OCI-LY7 (cell line): ENCODE measurements at regions of chr5 and their contacts with region 1.

Region 1: DNA sequence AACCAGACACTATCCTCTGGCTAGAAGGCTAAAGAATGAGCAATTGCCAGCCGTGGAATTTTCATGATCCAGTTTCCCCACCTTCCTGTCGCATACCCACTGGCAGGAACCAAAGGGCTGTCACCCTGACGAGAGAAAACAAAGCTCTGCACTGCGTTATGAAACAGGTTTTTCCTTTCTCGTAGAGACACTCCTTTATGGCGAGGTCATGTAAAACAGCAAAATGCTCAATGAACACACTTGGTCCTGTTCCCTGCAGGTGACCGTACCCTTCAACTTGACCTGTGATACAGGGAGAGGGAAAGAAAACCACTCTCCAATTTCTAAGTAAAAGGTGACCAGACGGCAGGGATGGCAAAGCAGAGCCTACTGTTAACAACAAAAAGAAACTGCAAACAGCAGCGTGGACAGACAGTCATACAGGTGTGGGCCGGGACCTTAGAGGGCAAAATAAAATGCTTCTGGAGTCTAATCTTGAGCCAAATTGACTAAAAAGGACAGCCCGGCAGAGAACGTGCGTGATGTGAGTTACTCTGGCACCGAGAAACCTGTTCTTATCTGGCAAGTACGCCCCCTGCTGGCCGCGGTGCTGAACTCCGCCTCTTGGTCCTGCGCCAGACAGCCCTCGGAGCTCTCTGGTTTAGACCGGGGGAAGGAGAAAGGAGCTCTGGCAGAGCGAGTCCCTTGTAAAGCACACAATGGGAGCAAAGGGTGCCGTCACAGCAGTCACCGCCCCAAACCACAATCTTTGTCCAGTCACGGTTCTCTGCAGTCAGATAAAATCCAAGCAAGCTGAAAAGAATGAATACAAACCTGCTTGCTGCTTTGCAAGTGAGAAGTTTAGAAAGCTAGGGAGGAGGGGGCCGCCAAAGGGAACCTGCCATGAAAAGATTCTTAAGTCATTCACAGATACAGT is 98.9 kb downstream of the EFNA5 start:
- DNase-seq: peak; percentile 94
- H3K4me3 ChIP-seq: peak overlapping the region; percentile 60
- H3K27ac ChIP-seq: peak overlapping the region; percentile 96
- H3K4me1 ChIP-seq: peaks cover 63% of the 10 kb centered on the region
- CTCF ChIP-seq: peak; percentile 96

Region 2: DNA sequence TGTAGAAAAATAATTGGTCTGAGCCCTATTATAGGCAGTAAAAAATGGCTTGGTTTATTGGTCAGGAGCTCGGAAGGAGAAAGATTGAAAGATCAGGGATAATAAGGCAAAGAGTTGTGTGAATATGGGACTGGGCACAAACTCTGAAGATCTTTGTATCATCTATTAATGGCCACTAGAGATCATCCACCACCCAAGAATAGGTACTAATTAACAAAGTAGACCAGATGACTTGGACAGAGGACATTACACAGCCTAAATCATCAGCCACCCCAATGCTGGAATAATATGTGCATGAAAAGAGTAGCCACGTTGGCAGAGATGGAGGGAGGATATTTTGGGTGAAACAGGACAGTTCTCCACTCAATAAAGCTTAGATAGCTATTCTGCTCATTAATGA is 265.3 kb before region 1 on chr5:
- CTCF ChIA-PET with region 1: no interaction called
- POLR2A ChIA-PET with region 1: no interaction called
- intact Hi-C with region 1: loop called (anchors 2 kb)
- DNase-seq: peak; percentile 13
- H3K4me3 ChIP-seq: no peak overlapping the region
- H3K27ac ChIP-seq: no peak overlapping the region
- H3K4me1 ChIP-seq: peaks cover 18% of the 10 kb centered on the region
- CTCF ChIP-seq: no peak

Region 3: DNA sequence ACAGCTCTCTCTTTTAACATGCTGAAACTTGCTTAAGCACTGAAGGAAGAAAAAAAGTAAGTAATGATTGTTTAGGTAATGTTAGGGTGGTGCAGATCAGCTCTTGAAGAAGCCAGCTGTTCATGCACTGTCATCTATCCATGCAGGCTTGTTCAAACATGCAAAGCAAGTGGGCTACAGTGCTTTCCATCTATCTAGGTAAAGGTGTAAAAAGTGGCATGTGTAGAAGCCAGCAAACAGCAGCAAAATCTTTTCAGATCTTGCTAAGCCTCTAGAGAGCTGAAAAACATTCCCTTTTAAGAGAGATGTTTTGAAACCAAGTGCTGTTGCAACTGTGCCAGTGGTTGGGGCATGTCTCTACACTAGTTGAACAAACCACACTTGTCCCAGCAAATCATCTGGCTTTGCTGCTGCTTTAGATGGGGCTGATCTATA is 115.6 kb before region 1 on chr5:
- CTCF ChIA-PET with region 1: no interaction called
- POLR2A ChIA-PET with region 1: interaction called, 5 read pairs
- intact Hi-C with region 1: loop called (anchors 2 kb)
- DNase-seq: no peak
- H3K4me3 ChIP-seq: no peak overlapping the region
- H3K27ac ChIP-seq: no peak overlapping the region
- H3K4me1 ChIP-seq: peaks cover 55% of the 10 kb centered on the region
- CTCF ChIP-seq: no peak

Region 4: DNA sequence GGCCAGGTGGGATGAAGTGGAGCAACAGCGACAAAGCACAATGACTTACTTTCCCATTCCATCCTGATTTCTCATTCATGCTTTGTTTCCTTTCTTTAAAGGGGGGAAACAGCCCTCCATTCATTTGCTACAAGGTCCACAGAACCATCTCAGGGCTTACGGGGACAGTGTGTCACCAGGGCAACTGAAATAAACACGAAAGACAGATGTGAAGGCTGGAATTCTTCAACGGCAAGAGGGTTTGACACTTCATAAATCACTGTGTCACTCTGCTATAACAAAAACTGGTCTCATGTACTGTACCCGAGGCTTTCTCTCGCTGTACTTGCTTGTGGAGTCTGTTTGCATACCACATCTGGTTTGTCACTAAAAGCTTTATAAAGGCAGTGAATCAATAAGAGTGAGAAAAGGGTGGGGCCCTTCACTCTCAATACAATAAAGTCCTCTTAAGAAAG is 52.0 kb before region 1 on chr5:
- CTCF ChIA-PET with region 1: interaction called, 33 read pairs
- POLR2A ChIA-PET with region 1: interaction called, 154 read pairs
- intact Hi-C with region 1: loop called (anchors 1 kb)
- DNase-seq: peak; percentile 87
- H3K4me3 ChIP-seq: peak overlapping the region; percentile 45
- H3K27ac ChIP-seq: peak overlapping the region; percentile 77
- H3K4me1 ChIP-seq: peaks cover 88% of the 10 kb centered on the region
- CTCF ChIP-seq: no peak

Region 5: DNA sequence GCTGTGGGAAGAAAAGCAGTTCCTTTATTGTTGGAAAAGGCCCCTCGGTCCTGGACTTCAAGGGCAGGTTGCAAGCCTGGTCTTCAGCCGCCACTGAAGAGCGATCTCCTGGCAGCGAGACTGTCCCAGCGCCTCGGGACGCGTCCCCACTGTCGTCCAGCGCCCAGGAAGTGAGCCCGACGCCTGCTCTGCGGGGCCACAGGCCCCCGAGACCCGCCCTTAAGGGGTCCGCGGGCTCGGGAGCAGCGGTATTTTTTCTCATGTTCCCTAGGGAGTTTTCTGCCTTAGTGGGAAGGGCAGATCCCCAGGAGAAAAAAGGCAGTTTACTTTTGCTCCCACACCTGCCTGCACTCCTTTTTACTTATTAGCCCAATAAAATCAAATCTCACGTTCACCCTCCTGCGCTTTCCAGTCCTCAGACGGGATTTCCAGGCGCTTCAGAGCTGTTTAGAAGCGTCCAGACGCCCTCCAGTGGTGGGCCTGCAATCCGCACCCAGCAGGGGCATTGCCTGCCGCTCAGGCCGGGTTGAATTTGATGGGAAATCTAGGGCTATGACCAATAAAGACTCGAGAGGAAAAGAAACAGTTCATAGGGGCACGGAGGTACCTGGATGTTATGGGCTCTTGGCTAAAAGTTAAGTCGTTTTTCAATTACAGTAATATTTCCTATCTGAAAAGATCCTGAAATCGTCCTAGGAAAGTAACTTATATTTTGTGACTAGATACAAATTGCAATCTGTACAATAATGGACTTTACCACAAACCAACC is 101.7 kb after region 1 on chr5:
- CTCF ChIA-PET with region 1: no interaction called
- POLR2A ChIA-PET with region 1: interaction called, 3 read pairs
- intact Hi-C with region 1: loop called (anchors 1 kb)
- DNase-seq: peak; percentile 93
- H3K4me3 ChIP-seq: peak overlapping the region; percentile 74
- H3K27ac ChIP-seq: peak overlapping the region; percentile 28
- H3K4me1 ChIP-seq: peaks cover 25% of the 10 kb centered on the region
- CTCF ChIP-seq: peak; percentile 99

Region 6: GRCh38 chr5:107713228-107713627 is 141.3 kb after region 1 on chr5:
- CTCF ChIA-PET with region 1: no interaction called
- POLR2A ChIA-PET with region 1: no interaction called
- intact Hi-C with region 1: no loop called
- DNase-seq: no peak
- H3K4me3 ChIP-seq: no peak overlapping the region
- H3K27ac ChIP-seq: no peak overlapping the region
- H3K4me1 ChIP-seq: no peaks in the 10 kb centered on the region
- CTCF ChIP-seq: no peak